AG04450 (cell line): ENCODE measurements at regions of chr16 and their contacts with region 1.

Region 1: GRCh38 chr16:2003827-2004641 is 5.6 kb downstream of the ZNF598 start:
- DNase-seq: peak; percentile 51
- H3K4me3 ChIP-seq: 0 out of 2 replicates have a peak overlapping the region, but pooled peaks have one; percentile 13
- H3K27ac ChIP-seq: no peak overlapping the region
- H3K27me3 ChIP-seq: no peaks in the 10 kb centered on the region
- CTCF ChIP-seq: peak; percentile 94

Region 2: DNA sequence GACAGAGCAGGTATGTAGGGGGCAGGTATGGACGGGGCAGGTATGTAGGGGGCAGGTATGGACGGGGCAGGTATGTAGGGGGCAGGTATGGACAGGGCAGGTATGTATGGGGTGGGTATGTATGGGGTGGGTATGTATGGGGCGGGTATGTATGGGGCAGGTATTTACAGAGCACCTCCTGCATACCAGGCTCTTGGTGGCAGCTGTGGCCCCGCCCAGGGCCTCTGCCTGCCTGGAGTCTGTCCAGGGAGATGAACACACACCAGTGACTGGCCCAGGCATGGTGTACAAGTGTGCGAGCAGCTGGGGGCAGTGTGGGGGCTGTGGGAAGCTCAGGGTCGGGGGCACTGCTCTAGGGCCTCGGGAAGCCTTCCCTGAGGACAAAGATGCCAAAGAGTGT is 54.0 kb before region 1 on chr16:
- CTCF ChIA-PET with region 1: no interaction called
- POLR2A ChIA-PET with region 1: no interaction called
- DNase-seq: no peak
- H3K4me3 ChIP-seq: no peak overlapping the region
- H3K27ac ChIP-seq: no peak overlapping the region
- H3K27me3 ChIP-seq: no peaks in the 10 kb centered on the region
- CTCF ChIP-seq: no peak

Region 3: DNA sequence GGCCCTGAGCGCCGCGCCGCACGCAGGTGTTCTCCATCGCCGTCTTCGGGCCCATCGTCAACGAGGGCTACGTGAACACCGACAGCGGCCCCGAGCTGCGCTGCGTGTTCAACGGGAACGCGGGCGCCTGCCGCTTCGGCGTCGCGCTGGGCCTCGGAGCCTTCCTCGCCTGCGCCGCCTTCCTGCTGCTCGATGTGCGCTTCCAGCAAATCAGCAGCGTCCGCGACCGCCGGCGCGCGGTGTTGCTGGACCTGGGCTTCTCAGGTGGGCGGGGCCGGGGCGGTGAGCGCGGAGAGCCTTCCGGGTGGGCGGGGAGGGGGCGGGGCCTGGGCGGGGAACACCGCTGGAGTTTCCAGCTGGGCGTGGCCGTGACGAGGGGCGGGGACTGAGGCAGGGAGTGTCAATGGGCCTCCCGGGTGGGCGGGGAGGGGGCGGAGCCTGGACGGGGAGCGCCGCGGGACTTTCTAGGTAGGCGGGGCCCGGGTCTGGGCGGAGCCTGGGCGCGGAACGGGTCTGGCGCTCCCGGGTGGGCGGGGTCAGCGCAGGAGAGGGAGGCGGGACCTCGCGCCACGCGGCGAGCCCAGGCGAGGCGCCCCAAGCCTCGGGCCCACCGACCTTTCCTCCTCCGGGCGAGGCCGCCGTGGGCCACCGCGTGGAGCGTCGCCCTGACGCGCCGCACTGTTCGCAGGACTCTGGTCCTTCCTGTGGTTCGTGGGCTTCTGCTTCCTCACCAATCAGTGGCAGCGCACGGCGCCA is 11.9 kb before region 1 on chr16:
- CTCF ChIA-PET with region 1: interaction called, 16 read pairs
- POLR2A ChIA-PET with region 1: interaction called, 9 read pairs
- DNase-seq: peak; percentile 67
- H3K4me3 ChIP-seq: peak overlapping the region; percentile 48
- H3K27ac ChIP-seq: no peak overlapping the region
- H3K27me3 ChIP-seq: peaks cover 21% of the 10 kb centered on the region
- CTCF ChIP-seq: no peak